CD8-positive, alpha-beta memory T cell (primary cell): ENCODE measurements at regions of chr12 and their contacts with region 1.

Region 1: GRCh38 chr12:132414634-132415326 is 75.2 kb upstream of the FBRSL1 start:
- DNase-seq: peak; percentile 67 to 82 (median 71)
- H3K4me3 ChIP-seq: no peak overlapping the region
- H3K4me3 Mint-ChIP-seq: no peak overlapping the region
- H3K27ac ChIP-seq: no peak overlapping the region
- H3K27ac Mint-ChIP-seq: peak overlapping the region in 1 of 8 donors; percentile 90
- H3K4me1 ChIP-seq: peaks cover 11% of the 10 kb centered on the region
- H3K4me1 Mint-ChIP-seq: peaks cover 0 to 3% (median 2%) of the 10 kb centered on the region in 3 donors
- H3K27me3 ChIP-seq: no peaks in the 10 kb centered on the region
- H3K27me3 Mint-ChIP-seq: no peaks in the 10 kb centered on the region

Region 2: DNA sequence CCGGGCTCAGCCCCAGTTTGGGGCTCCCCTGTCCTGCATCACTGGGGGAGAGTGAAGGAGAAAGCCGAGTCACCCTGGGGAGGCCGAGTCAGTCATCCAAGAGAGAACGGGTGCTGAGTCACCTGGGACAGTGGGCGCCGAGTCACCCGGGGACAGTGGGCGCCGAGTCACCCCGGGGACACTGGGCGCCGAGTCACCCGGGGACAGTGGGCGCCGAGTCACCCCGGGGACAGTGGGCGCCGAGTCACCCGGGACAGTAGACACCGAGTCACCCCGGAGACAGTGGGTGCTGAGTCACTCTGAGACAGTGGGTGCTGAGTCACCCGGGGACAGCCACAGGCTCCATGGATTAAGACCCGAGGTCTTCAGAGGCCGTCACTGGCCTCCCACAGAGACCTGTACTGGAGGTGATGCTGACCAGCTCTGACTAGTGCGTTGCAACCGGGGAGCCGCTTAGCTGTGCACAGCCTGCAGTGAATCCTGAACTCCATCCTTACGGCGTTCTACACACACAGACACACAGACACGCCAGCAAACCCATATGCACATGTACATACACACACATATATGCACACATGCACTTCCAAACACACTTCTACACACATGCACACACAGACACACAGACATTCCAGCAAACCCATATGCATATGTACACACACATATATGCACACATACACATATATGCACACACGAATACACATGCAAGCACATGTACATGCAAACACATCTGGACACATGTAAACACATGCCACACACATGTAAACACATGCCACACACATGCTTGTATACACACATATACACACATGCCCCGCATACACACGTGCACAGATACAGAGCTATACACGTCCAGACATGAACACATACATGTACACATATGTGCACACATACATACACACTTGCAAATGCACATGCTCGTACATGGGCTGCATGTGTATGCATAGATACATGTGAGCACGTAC is 20.5 kb before region 1 on chr12:
- CTCF ChIA-PET with region 1: no interaction called
- POLR2A ChIA-PET with region 1: no interaction called
- DNase-seq: no peak
- H3K4me3 ChIP-seq: no peak overlapping the region
- H3K4me3 Mint-ChIP-seq: no peak overlapping the region
- H3K27ac ChIP-seq: no peak overlapping the region
- H3K27ac Mint-ChIP-seq: no peak overlapping the region
- H3K4me1 ChIP-seq: no peaks in the 10 kb centered on the region
- H3K4me1 Mint-ChIP-seq: no peaks in the 10 kb centered on the region
- H3K27me3 ChIP-seq: peaks cover 4% of the 10 kb centered on the region
- H3K27me3 Mint-ChIP-seq: peaks cover 2 to 17% of the 10 kb centered on the region in 2 donors

Region 3: GRCh38 chr12:132429946-132430643 is 15.3 kb after region 1 on chr12:
- CTCF ChIA-PET with region 1: interaction called, 15 read pairs
- POLR2A ChIA-PET with region 1: no interaction called
- DNase-seq: peak; percentile 43 to 80 (median 66)
- H3K4me3 ChIP-seq: peak overlapping the region; percentile 55
- H3K4me3 Mint-ChIP-seq: peak overlapping the region in 6 of 7 donors; percentile 54 to 82 (median 74)
- H3K27ac ChIP-seq: no peak overlapping the region
- H3K27ac Mint-ChIP-seq: peak overlapping the region in 4 of 8 donors; percentile 34 to 70 (median 50)
- H3K4me1 ChIP-seq: peaks cover 41% of the 10 kb centered on the region
- H3K4me1 Mint-ChIP-seq: peaks cover 20 to 38% (median 25%) of the 10 kb centered on the region in 3 donors
- H3K27me3 ChIP-seq: peaks cover 3% of the 10 kb centered on the region
- H3K27me3 Mint-ChIP-seq: peaks cover 0 to 8% of the 10 kb centered on the region in 2 donors

Region 4: DNA sequence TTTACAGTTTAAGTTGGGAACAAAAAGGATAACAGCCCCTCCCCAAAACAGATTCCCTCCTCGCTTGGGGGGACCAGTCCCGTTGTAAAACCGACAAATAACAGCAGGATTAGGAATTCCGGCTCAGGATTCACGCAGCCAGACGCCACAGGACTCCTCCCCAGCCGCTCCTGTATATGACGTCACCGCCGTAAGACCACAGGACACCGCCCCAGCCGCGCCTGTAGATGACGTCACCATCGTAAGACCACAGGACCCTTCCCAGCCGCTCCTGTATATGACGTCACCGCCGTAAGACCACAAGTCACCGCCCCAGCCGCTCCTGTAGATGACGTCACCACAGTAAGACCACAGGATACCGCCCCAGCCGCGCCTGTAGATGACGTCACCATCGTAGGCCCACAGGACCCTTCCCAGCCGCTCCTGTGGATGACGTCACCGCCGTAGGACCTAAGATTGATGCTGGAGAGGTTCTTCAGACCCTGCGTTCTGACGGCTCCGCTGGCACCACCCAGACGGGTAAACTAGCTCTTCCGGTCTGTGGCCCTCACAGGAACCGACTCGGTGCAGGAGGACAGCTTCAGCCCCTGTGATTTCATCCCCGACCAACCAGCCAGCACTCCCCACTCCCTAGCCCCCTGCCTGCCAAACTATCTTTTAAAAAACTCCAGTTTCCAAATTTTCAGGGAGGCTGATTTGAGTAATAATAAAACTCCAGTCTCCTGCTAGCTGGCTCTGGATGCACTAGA is 31.3 kb after region 1 on chr12:
- CTCF ChIA-PET with region 1: interaction called, 15 read pairs
- POLR2A ChIA-PET with region 1: no interaction called
- DNase-seq: peak; percentile 62 to 88 (median 71)
- H3K4me3 ChIP-seq: peak overlapping the region; percentile 63
- H3K4me3 Mint-ChIP-seq: peak overlapping the region; percentile 83 to 94 (median 89)
- H3K27ac ChIP-seq: peak overlapping the region; percentile 90
- H3K27ac Mint-ChIP-seq: peak overlapping the region; percentile 97 to 100 (median 99)
- H3K4me1 ChIP-seq: peaks cover 39% of the 10 kb centered on the region
- H3K4me1 Mint-ChIP-seq: peaks cover 43 to 47% (median 46%) of the 10 kb centered on the region in 3 donors
- H3K27me3 ChIP-seq: no peaks in the 10 kb centered on the region
- H3K27me3 Mint-ChIP-seq: peaks cover 0 to 8% of the 10 kb centered on the region in 2 donors

Region 5: DNA sequence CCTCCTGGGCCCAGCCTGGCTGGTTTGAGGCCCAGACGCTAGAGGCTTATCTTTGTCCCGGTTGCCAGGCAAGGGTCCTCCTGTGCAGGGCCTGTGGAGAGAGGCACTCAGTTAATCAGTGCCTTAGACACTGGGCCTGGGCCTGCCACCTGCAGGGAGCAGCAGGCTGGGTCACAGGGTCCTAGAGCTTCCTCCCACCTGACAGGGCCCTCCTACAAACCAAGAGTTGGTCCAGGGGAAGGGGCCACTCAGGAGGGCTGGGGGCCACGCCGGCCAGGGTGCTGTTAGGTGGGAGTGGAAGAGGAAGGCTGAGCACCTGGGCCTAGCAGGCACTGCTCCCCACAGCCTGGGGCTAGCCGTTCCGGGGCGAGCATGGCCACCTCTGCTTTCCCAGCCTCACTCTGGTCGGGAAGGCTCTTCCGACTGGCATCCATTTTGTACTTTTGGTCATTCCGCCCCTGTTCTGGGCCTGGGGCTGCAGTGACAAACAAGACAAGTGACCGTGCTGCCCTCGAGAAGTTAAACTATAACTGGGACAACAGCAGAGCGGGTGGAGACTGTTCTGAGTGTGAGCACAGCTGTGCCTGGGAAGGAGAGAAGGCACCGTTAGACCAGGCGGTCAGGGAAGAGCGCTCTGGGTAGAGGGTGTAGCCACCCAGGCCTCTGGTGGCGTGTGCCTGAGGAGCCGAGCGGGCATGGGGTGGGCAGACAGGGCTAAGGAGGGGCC is 102.4 kb after region 1 on chr12:
- CTCF ChIA-PET with region 1: interaction called, 71 read pairs
- POLR2A ChIA-PET with region 1: interaction called, 3 read pairs
- DNase-seq: no peak
- H3K4me3 ChIP-seq: no peak overlapping the region
- H3K4me3 Mint-ChIP-seq: no peak overlapping the region
- H3K27ac ChIP-seq: no peak overlapping the region
- H3K27ac Mint-ChIP-seq: peak overlapping the region in 2 of 8 donors; percentile 33 to 35
- H3K4me1 ChIP-seq: no peaks in the 10 kb centered on the region
- H3K4me1 Mint-ChIP-seq: peaks cover 5 to 40% (median 17%) of the 10 kb centered on the region in 3 donors
- H3K27me3 ChIP-seq: no peaks in the 10 kb centered on the region
- H3K27me3 Mint-ChIP-seq: peaks cover 0 to 4% of the 10 kb centered on the region in 2 donors

Region 6: GRCh38 chr12:132523576-132524331 is 109.0 kb after region 1 on chr12:
- CTCF ChIA-PET with region 1: interaction called, 71 read pairs
- POLR2A ChIA-PET with region 1: interaction called, 3 read pairs
- DNase-seq: peak; percentile 58 to 75 (median 66)
- H3K4me3 ChIP-seq: no peak overlapping the region
- H3K4me3 Mint-ChIP-seq: no peak overlapping the region
- H3K27ac ChIP-seq: no peak overlapping the region
- H3K27ac Mint-ChIP-seq: peak overlapping the region in 1 of 8 donors; percentile 20
- H3K4me1 ChIP-seq: peaks cover 7% of the 10 kb centered on the region
- H3K4me1 Mint-ChIP-seq: peaks cover 0 to 39% (median 10%) of the 10 kb centered on the region in 3 donors
- H3K27me3 ChIP-seq: no peaks in the 10 kb centered on the region
- H3K27me3 Mint-ChIP-seq: peaks cover 0 to 2% of the 10 kb centered on the region in 2 donors

Region 7: DNA sequence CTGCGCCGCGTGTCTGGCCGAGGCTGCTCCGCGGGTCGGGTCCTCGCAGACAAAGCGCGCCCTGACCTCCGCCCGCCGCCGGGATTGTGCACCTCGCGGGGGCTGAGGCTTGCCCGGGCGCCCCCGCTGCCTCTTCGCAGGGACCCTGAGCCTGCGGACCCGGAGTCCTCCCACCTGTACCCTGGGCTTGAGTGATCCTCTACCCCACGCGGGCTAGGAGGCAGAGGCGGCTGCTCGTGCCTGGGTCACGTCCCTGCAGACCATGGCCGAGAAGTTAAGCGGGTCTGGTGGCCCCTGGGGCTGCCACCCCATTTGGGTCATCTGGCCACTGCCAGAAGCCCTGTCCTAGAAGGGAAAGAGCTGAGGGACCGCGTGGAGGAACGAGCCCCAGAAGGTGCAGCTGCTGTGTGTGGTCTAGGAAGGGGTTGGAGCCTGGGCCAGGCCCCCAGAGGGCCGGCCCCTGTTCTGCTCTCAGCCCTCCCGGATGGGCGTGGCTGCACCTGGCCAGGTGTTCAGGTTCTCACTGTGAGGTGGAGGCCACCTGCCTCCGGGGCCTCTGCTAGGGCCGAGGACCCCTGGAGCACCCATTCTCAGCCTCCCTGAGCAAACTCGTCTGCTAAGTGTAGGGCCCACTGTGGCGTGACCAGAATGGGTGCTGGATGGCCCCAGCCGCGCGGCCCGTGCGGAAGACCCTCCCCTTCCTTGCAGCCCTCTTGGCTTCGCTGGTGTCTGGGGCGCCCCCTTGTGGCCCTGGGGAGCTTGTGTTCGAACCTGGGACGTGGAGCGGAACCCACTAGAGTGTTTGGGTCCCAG is 146.0 kb after region 1 on chr12:
- CTCF ChIA-PET with region 1: interaction called, 10 read pairs
- POLR2A ChIA-PET with region 1: interaction called, 10 read pairs
- DNase-seq: peak; percentile 45 to 78 (median 55)
- H3K4me3 ChIP-seq: peak overlapping the region; percentile 37
- H3K4me3 Mint-ChIP-seq: peak overlapping the region; percentile 39 to 77 (median 70)
- H3K27ac ChIP-seq: no peak overlapping the region
- H3K27ac Mint-ChIP-seq: peak overlapping the region in 1 of 8 donors; percentile 22
- H3K4me1 ChIP-seq: peaks cover 26% of the 10 kb centered on the region
- H3K4me1 Mint-ChIP-seq: peaks cover 8 to 33% (median 16%) of the 10 kb centered on the region in 3 donors
- H3K27me3 ChIP-seq: no peaks in the 10 kb centered on the region
- H3K27me3 Mint-ChIP-seq: peaks cover 5 to 16% of the 10 kb centered on the region in 2 donors

Region 8: DNA sequence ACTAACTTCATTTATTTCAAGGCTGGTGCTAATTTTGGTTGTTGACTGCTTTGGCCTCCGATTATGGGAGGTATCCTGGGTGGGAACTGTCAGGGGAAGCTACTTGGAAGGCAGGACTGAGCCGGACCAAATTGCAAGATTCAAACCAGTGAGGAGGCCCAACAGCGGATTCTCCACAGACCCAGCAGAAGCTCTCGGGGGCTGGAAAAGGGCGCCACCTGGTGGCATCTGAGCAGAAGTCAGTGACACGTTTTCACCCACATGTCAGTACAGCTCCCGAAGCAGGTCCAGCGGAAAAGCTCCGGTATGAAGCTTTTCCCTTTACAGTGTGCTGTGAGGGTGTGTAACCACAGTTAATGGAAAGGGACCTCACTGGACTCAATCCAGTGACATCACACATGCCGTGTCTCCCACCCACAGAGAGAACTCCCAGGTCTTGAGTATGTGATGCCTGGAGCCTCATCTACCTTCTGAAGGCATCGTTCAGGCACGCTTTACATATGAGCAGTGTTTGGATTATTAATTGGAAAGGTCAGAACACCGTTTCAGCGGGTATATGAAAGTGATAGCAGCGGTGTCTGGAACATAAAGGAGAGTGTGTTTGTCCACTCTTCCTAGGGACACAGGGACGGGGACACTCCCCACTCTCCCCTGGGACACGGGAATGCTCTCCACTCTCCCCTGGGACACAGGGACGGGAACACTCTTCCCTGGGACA is 200.2 kb after region 1 on chr12:
- CTCF ChIA-PET with region 1: interaction called, 41 read pairs
- POLR2A ChIA-PET with region 1: interaction called, 4 read pairs
- DNase-seq: peak; percentile 66 to 84 (median 68)
- H3K4me3 ChIP-seq: no peak overlapping the region
- H3K4me3 Mint-ChIP-seq: no peak overlapping the region
- H3K27ac ChIP-seq: no peak overlapping the region
- H3K27ac Mint-ChIP-seq: peak overlapping the region in 1 of 8 donors; percentile 3
- H3K4me1 ChIP-seq: no peaks in the 10 kb centered on the region
- H3K4me1 Mint-ChIP-seq: peaks cover 13 to 20% (median 14%) of the 10 kb centered on the region in 3 donors
- H3K27me3 ChIP-seq: peaks cover 17% of the 10 kb centered on the region
- H3K27me3 Mint-ChIP-seq: peaks cover 36 to 44% of the 10 kb centered on the region in 2 donors